GM10248 (cell line): ENCODE measurements at regions of chr13 and their contacts with region 1.

Region 1: DNA sequence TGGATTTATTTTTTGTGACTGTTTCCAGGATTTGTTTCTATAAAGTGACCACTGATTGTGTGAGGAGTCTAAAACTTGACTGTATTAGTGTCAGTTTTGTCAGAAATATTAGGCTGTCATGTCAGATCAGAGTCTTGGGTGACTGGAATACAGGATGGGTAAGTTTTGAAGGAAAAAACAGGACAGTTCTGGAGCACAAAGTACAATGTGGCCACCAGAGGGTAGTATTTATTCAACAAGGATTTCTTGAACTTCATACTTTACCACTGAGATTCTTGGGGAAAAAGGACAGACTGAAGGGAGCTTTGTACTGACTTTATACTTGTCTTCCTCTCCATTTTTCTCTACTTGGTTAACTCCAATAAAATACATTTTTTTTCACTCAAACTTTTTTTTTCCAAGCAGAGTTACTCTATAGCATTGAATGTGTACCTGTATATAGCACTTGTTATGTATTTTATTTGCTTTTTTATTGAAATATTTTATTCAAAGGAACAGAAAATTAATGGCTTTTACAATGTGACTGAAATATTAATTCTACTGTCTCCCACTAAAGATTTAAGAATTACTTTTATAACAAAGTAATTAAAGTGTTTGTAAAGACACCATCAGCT is 51.1 kb downstream of the LMO7 start:
- DNase-seq: no peak
- CTCF ChIP-seq: peak; percentile 32

Region 2: DNA sequence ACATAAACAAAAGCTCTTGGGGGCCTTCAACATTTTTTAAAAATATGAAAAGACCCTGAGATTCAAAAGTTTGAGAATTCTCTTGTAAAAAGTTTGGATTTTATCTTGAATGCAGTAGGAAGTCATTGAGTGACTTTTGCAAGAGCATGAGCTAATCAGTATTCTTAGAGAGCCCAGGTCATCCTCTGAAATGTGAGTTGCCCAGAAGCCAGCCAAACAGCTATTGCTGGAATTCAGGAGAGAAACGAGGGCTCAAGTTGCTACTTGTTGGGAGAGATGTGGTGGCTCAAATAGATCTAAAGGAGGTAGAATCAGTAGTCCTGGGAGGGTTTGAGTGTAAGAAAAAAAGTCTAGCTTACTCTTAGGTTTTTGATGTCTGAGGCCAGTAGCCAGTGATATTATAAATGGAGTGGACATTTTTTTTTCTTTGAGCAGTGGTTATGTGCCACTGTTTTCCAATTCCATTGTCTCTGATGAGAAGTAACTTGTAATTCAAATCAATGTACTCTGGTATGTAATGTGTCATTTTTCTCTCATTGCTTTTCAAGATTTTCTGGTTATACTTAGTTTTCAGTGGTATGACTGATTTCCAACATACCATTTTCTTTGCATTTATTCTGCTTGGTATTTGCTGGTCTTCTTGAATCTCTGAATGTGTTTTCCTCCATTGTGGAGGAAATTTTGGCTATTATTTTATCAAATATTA is 20.5 kb before region 1 on chr13:
- CTCF ChIA-PET with region 1: interaction called, 10 read pairs
- POLR2A ChIA-PET with region 1: no interaction called
- DNase-seq: no peak
- CTCF ChIP-seq: no peak

Region 3: DNA sequence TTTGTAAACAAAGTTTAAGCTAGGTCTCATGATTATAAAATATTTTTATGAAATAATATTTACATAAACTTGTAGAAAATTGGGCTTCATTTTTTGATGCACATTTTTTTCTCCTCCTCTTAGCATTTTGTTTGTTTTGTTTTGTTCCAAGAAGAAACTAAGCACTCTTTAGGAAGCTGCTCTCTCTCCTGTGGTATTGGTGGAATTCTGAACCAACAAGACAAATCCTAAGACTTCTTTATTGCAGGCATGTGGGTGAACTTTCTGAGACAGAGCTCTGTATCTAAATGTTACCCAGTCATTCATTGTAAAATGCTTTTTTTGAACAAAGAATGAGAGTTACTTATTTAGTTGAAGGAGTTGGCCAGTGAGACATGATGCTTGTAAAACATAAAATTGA is 11.8 kb before region 1 on chr13:
- CTCF ChIA-PET with region 1: interaction called, 10 read pairs
- POLR2A ChIA-PET with region 1: no interaction called
- DNase-seq: no peak
- CTCF ChIP-seq: no peak